T-cell (primary cell): ENCODE measurements at regions of chr19 and their contacts with region 1.

Region 1: GRCh38 chr19:7394731-7395359 is 46.1 kb downstream of the ARHGEF18 start:
- DNase-seq: peak; percentile 71 to 95 (median 83)
- ATAC-seq: peak; percentile 84 to 91 (median 88)
- H3K4me3 ChIP-seq: peak overlapping the region; percentile 56 to 59
- H3K4me3 Mint-ChIP-seq: peak overlapping the region; percentile 78 to 86 (median 80)
- H3K27ac ChIP-seq: peak overlapping the region; percentile 47
- H3K27ac Mint-ChIP-seq: peak overlapping the region; percentile 59 to 74
- H3K4me1 ChIP-seq: peaks cover 18 to 53% of the 10 kb centered on the region in 2 experiments
- H3K4me1 Mint-ChIP-seq: peaks cover 35 to 58% (median 56%) of the 10 kb centered on the region in 3 donors
- H3K27me3 ChIP-seq: no peaks in the 10 kb centered on the region
- H3K27me3 Mint-ChIP-seq: no peaks in the 10 kb centered on the region

Region 2: DNA sequence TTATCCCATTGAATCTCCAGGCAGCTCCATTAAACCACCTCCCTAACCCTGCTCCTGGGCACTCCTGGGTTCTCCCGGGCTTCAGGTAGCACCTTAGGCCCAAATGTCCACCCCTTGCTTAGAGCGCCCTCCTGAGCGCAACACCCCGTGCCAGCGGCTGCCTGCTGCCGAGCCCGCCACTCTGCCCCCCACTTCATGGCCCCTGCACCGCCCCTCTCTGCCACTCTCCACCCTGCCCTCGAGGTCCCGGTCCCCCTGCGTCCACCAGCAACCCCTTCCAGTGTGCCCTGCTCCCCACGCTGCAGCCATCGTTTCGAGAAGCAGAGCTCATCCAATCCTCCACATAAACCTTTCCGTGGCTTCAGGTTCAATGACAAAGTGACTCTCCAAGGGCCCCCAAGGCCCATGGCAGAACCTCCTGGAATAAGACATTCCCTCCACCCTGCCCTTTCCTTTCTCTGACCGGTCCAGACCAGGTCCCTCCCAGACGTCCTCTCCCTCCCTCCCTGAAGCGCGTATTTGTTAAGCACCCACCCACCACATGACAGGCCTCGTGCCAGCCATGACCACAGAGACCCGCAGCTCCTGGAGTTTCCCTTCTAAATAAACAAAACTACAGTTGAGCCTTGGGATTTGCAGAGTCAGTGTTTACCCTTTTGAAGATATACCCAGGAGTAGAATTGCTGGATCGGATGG is 20.5 kb after region 1 on chr19:
- CTCF ChIA-PET with region 1: no interaction called
- POLR2A ChIA-PET with region 1: no interaction called
- DNase-seq: no peak
- ATAC-seq: no peak
- H3K4me3 ChIP-seq: no peak overlapping the region
- H3K4me3 Mint-ChIP-seq: no peak overlapping the region
- H3K27ac ChIP-seq: no peak overlapping the region
- H3K27ac Mint-ChIP-seq: peak overlapping the region in 1 of 2 donors; percentile 48
- H3K4me1 ChIP-seq: peaks cover 0 to 18% of the 10 kb centered on the region in 2 experiments
- H3K4me1 Mint-ChIP-seq: peaks cover 39 to 41% (median 41%) of the 10 kb centered on the region in 3 donors
- H3K27me3 ChIP-seq: no peaks in the 10 kb centered on the region
- H3K27me3 Mint-ChIP-seq: no peaks in the 10 kb centered on the region

Region 3: GRCh38 chr19:7515645-7516151 is 120.9 kb after region 1 on chr19 and contains the start of gene ZNF358:
- CTCF ChIA-PET with region 1: no interaction called
- POLR2A ChIA-PET with region 1: interaction called in 1 of 2 experiments, 12 read pairs
- DNase-seq: peak in 5 of 35 experiments; percentile 12 to 47 (median 37)
- ATAC-seq: peak; percentile 75 to 87 (median 84)
- H3K4me3 ChIP-seq: peak within 1 kb of the TSS; percentile 39 to 41
- H3K4me3 Mint-ChIP-seq: peak within 1 kb of the TSS; percentile 77 to 86 (median 80)
- H3K27ac ChIP-seq: no peak within 1 kb of the TSS
- H3K27ac Mint-ChIP-seq: peak within 1 kb of the TSS; percentile 5 to 75
- H3K4me1 ChIP-seq: peaks cover 0 to 12% of the 10 kb centered on the region in 2 experiments
- H3K4me1 Mint-ChIP-seq: peaks cover 9 to 21% (median 17%) of the 10 kb centered on the region in 3 donors
- H3K27me3 ChIP-seq: peaks cover 2 to 34% of the 10 kb centered on the region in 2 experiments
- H3K27me3 Mint-ChIP-seq: peaks cover 5 to 34% of the 10 kb centered on the region in 2 donors
- total RNA-seq, gene ZNF358: 4.3 to 10.3 (median 8.5) TPM

Region 4: DNA sequence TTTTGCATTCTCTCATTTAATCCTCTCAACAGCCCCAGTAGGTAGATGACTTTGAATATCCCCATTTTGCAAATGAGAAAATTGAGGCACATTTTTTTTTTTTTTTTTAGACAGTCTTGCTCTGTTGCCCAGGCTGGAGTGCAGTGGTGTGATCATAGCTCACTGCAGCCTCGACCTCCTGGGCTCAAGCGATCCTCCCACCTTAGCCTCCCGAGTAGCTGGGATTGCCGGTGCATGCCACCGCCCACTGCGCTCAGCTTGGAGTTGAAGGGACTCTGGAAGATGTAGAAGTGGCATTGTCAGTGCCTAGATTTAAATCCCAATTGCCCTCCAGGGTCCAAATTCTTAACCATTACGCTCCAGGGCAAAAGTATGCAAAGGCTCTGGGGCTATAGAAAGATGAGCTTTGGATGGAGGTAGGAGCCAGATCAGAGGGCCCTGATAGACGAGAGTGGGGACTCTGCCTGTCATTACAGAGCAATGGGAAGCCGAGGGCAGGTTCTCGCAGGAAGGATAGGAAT is 126.8 kb after region 1 on chr19:
- CTCF ChIA-PET with region 1: interaction called, 3 to 6 read pairs
- POLR2A ChIA-PET with region 1: interaction called in 1 of 2 experiments, 13 read pairs
- DNase-seq: no peak
- ATAC-seq: no peak
- H3K4me3 ChIP-seq: peak overlapping the region in 1 of 2 donors; percentile 65
- H3K4me3 Mint-ChIP-seq: peak overlapping the region; percentile 78 to 88 (median 88)
- H3K27ac ChIP-seq: no peak overlapping the region
- H3K27ac Mint-ChIP-seq: peak overlapping the region; percentile 80 to 85
- H3K4me1 ChIP-seq: peaks cover 8 to 25% of the 10 kb centered on the region in 2 experiments
- H3K4me1 Mint-ChIP-seq: peaks cover 9 to 23% (median 22%) of the 10 kb centered on the region in 3 donors
- H3K27me3 ChIP-seq: peaks cover 0 to 18% of the 10 kb centered on the region in 2 experiments
- H3K27me3 Mint-ChIP-seq: peaks cover 0 to 17% of the 10 kb centered on the region in 2 donors